ENCODE measurements at regions of chrX and their contacts with region 1.

Region 1: DNA sequence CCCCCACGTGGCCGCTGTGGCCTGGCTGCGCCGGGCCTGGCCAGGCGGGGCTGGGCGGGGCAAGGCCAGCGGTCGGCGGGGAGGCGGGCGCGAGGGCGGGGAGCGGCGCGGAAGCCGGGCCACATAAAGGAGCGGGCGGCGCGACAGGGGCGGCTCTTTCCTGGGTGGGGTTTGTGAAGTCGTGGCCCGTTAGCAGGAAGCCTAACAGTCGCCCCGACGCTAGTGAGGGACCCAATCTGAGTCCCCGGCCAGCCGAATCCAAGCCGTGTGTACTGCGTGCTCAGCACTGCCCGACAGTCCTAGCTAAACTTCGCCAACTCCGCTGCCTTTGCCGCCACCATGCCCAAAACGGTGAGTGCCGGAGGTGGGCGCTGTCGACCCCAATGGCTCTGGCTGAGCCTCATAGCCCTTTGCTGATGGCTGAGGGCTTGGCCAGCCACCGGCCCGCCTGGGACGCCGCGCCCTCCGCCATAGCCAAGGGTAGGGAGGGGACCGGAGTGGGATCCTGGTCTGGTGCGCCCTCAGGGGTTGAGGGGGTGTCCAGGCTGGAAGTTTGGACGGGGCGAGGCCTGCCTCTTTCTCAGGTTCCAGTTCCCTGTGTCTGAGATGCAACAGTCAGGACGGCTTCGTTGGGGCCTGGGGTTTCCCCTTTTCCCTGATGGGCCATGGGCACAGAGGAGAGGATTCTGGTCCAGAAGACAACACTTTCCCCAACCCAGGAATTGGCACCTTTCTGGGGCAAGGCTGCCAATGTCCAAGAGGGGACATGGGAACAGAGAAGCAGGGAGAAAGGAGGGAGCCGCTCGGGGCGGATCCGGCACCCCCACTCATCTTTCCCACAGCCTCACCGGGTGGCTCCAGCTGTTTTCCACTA is at the start of gene MSN:
- DNase-seq: peak; percentile 79 to 84
- ATAC-seq: peak; percentile 86 to 95 (median 90)
- H3K4me3 ChIP-seq: peak within 1 kb of the TSS; percentile 53 to 89 (median 78)
- H3K27ac ChIP-seq: peak within 1 kb of the TSS; percentile 90 to 100 (median 97)
- H3K4me1 ChIP-seq: peaks cover 2 to 42% (median 32%) of the 10 kb centered on the region in 9 donors
- H3K27me3 ChIP-seq: peaks cover 0 to 13% (median 0%) of the 10 kb centered on the region in 7 donors
- CTCF ChIP-seq: peak in 3 of 9 donors; percentile 9 to 21 (median 14)
- total RNA-seq, gene MSN: 106 to 238 (median 120) TPM

Region 2: DNA sequence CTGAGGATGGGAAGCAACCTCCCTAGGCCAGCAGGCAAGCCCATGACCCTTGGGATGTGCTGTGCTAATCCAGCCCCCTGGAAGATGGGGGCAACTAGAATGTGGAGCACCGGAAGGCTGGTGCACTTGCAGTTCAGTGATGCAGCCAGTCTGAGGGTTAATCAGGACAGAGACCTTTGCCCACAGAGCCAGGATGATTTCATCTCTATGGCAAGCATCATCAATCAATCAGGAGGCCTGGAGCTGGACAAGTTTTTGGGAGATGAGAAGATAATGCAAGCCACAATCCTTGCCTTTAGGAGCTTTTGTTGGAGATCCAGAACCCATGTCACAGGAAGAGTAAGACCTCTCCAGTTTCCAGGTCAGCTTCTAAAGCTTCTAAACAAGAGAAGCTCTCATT is 15.6 kb before region 1 on chrX:
- intact Hi-C with region 1: no loop called
- DNase-seq: no peak
- ATAC-seq: no peak
- H3K4me3 ChIP-seq: no peak overlapping the region
- H3K27ac ChIP-seq: no peak overlapping the region
- H3K4me1 ChIP-seq: peaks cover 0 to 9% (median 3%) of the 10 kb centered on the region in 9 donors
- H3K27me3 ChIP-seq: peaks cover 0 to 12% (median 0%) of the 10 kb centered on the region in 7 donors
- CTCF ChIP-seq: no peak

Region 3: GRCh38 chrX:65706041-65706828 is 38.5 kb after region 1 on chrX:
- intact Hi-C with region 1: loop called in 6 of 10 experiments (anchors 1 to 5 kb)
- DNase-seq: peak; percentile 22 to 59
- ATAC-seq: peak; percentile 47 to 93 (median 80)
- H3K4me3 ChIP-seq: no peak overlapping the region
- H3K27ac ChIP-seq: peak overlapping the region; percentile 58 to 85 (median 78)
- H3K4me1 ChIP-seq: peaks cover 2 to 87% (median 57%) of the 10 kb centered on the region in 9 donors
- H3K27me3 ChIP-seq: no peaks in the 10 kb centered on the region
- CTCF ChIP-seq: no peak

Region 4: GRCh38 chrX:65783746-65784145 is 116.0 kb after region 1 on chrX:
- intact Hi-C with region 1: no loop called
- DNase-seq: no peak
- ATAC-seq: no peak
- H3K4me3 ChIP-seq: no peak overlapping the region
- H3K27ac ChIP-seq: no peak overlapping the region
- H3K4me1 ChIP-seq: no peaks in the 10 kb centered on the region
- H3K27me3 ChIP-seq: peaks cover 0 to 66% (median 0%) of the 10 kb centered on the region in 7 donors
- CTCF ChIP-seq: no peak

Region 5: DNA sequence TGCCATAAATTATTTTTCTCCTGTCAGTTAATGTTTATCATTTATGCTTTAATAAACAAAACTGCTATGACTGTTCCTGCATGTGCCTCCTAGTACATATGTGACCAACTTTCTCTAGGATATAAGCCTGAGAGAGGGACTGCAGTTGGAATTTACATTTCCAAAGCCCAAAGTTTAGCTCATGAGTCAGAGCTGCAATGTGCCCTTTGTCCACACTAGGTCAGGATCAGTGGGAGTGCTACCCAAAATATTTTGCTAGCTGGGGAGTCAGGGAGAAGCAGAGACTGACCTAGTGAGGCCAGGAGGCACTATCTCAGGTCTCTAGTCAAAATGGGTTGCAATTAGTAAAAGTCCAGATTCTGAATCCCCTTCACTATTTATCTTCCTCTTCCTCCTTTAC is 1968.8 kb after region 1 on chrX:
- intact Hi-C with region 1: no loop called
- DNase-seq: no peak
- ATAC-seq: no peak
- H3K4me3 ChIP-seq: no peak overlapping the region
- H3K27ac ChIP-seq: no peak overlapping the region
- H3K4me1 ChIP-seq: no peaks in the 10 kb centered on the region
- H3K27me3 ChIP-seq: peaks cover 0 to 4% (median 0%) of the 10 kb centered on the region in 7 donors
- CTCF ChIP-seq: no peak